HepG2 (cell line): ENCODE measurements at regions of chr9 and their contacts with region 1.

Region 1: GRCh38 chr9:128034821-128035764 is 32.0 kb downstream of the NAIF1 start:
- DNase-seq: peak; percentile 81
- ATAC-seq: peak; percentile 97
- H3K4me3 ChIP-seq: no peak overlapping the region; a peak in 1 of 6 replicates
- H3K27ac ChIP-seq: no peak overlapping the region
- H3K4me1 ChIP-seq: peaks cover 16% of the 10 kb centered on the region
- H3K27me3 ChIP-seq: no peaks in the 10 kb centered on the region; a peak in 1 of 5 replicates
- CTCF ChIP-seq: peak; percentile 98
- EP300 ChIP-seq: no peak
- POLR2A ChIP-seq: no peak
- RAD21 ChIP-seq: peak; percentile 93

Region 2: GRCh38 chr9:127644943-127645342 is 390.1 kb before region 1 on chr9:
- CTCF ChIA-PET with region 1: no interaction called
- POLR2A ChIA-PET with region 1: no interaction called
- in situ Hi-C with region 1: no loop called
- intact Hi-C with region 1: no loop called
- DNase-seq: no peak
- ATAC-seq: no peak
- H3K4me3 ChIP-seq: no peak overlapping the region
- H3K27ac ChIP-seq: no peak overlapping the region
- H3K4me1 ChIP-seq: peaks cover 18% of the 10 kb centered on the region
- H3K27me3 ChIP-seq: no peaks in the 10 kb centered on the region
- CTCF ChIP-seq: no peak
- EP300 ChIP-seq: no peak
- POLR2A ChIP-seq: no peak
- RAD21 ChIP-seq: no peak

Region 3: GRCh38 chr9:127817881-127818434 is 217.1 kb before region 1 on chr9:
- CTCF ChIA-PET with region 1: no interaction called
- POLR2A ChIA-PET with region 1: no interaction called
- in situ Hi-C with region 1: no loop called
- intact Hi-C with region 1: no loop called
- DNase-seq: no peak
- ATAC-seq: no peak; the same call in 2 of the 3 replicates
- H3K4me3 ChIP-seq: no peak overlapping the region
- H3K27ac ChIP-seq: no peak overlapping the region
- H3K4me1 ChIP-seq: peaks cover 14% of the 10 kb centered on the region
- H3K27me3 ChIP-seq: no peaks in the 10 kb centered on the region
- CTCF ChIP-seq: no peak
- EP300 ChIP-seq: no peak
- POLR2A ChIP-seq: no peak
- RAD21 ChIP-seq: no peak

Region 4: GRCh38 chr9:127937388-127938280 is 97.5 kb before region 1 on chr9 and contains the start of gene DPM2:
- CTCF ChIA-PET with region 1: interaction called, 28 read pairs
- POLR2A ChIA-PET with region 1: interaction called, 4 read pairs
- in situ Hi-C with region 1: loop called (anchors 5 kb)
- intact Hi-C with region 1: loop called (anchors 2 kb)
- DNase-seq: peak; percentile 73
- ATAC-seq: peak; percentile 89
- H3K4me3 ChIP-seq: peak within 1 kb of the TSS; percentile 86 to 96 (median 89)
- H3K27ac ChIP-seq: peak within 1 kb of the TSS; percentile 50
- H3K4me1 ChIP-seq: peaks cover 36% of the 10 kb centered on the region
- H3K27me3 ChIP-seq: no peaks in the 10 kb centered on the region; a peak in 1 of 5 replicates
- CTCF ChIP-seq: no peak
- EP300 ChIP-seq: no peak
- POLR2A ChIP-seq: peak; percentile 50 to 71
- RAD21 ChIP-seq: 0 out of 2 replicates have a peak, but pooled peaks have one; percentile 13
- total RNA-seq, gene DPM2: 17.5 and 24.8 TPM in 2 replicates

Region 5: DNA sequence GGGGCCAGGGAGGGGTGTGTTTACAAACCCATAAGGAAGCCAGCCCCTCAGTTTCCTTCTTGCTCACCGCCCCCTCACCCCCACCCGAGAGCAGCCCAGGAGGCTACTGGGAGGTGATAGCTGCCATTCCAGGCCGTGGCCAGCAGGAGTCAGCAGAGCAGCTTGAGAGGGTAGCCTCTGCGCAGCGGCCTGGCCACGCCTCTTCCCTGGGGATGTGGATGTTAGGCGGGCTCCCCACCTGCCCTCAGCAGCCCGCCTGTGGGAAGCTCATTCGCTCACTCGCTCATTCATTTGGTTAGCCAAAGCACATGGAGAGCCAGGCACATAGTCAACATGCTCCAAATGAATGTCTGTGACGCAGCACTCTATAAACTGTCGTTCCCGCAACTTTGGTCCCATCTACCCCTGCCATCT is 91.4 kb before region 1 on chr9:
- CTCF ChIA-PET with region 1: interaction called, 28 read pairs
- POLR2A ChIA-PET with region 1: interaction called, 3 read pairs
- in situ Hi-C with region 1: loop called (anchors 5 kb)
- intact Hi-C with region 1: loop called (anchors 2 kb)
- DNase-seq: peak; percentile 61
- ATAC-seq: peak; percentile 78
- H3K4me3 ChIP-seq: no peak overlapping the region
- H3K27ac ChIP-seq: no peak overlapping the region
- H3K4me1 ChIP-seq: peaks cover 49% of the 10 kb centered on the region
- H3K27me3 ChIP-seq: no peaks in the 10 kb centered on the region
- CTCF ChIP-seq: peak; percentile 92
- EP300 ChIP-seq: no peak
- POLR2A ChIP-seq: no peak
- RAD21 ChIP-seq: peak; percentile 91

Region 6: DNA sequence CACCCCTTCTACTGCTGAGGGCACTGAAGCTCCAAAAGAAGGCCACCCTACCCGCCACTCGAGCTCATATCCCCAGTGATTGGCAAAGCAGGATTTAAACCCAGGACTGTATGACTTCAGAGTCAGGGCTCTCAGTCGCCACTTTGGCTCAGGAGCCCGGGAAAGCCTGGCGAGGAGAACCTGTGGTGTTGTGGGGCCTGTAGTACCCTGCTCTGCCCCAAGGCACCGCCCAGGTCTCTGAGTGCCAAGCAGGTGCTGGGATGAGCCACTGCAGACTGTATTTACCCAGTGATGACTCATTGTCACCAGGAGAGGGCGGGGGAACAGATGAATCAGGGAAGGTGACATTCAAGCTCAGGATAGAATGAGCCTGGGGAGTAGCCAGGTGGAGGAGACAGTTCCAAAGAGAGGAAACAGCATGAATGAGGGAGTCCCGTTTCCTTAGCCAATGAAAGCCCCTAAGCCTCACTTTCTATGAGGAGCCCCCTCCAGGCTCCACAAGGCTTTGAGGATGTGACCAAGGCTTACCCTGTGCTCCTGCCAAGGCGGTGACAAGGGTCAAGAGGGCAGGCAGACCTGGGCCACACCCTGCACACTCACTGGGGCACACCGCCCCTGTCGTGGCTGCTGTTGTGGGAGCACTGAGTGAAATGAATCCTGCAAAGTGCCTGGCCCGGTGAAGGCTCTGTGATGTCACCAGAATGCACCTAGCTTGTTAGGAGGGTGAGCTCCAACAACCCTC is 79.6 kb before region 1 on chr9:
- CTCF ChIA-PET with region 1: interaction called, 12 read pairs
- POLR2A ChIA-PET with region 1: interaction called, 5 read pairs
- in situ Hi-C with region 1: no loop called
- intact Hi-C with region 1: loop called (anchors 2 kb)
- DNase-seq: peak; percentile 93
- ATAC-seq: peak; percentile 79
- H3K4me3 ChIP-seq: 0 out of 6 replicates have a peak overlapping the region, but pooled peaks of 1 of the 3 experiments have one; percentile 8
- H3K27ac ChIP-seq: peak overlapping the region; percentile 96
- H3K4me1 ChIP-seq: peaks cover 62% of the 10 kb centered on the region
- H3K27me3 ChIP-seq: no peaks in the 10 kb centered on the region
- CTCF ChIP-seq: peak; percentile 83
- EP300 ChIP-seq: peak in 1 of 2 experiments; percentile 63; a peak in 2 of 4 replicates
- POLR2A ChIP-seq: no peak
- RAD21 ChIP-seq: peak; percentile 81

Region 7: GRCh38 chr9:128072144-128073021 is 37.3 kb after region 1 on chr9:
- CTCF ChIA-PET with region 1: no interaction called
- POLR2A ChIA-PET with region 1: no interaction called
- in situ Hi-C with region 1: no loop called
- intact Hi-C with region 1: no loop called
- DNase-seq: no peak
- ATAC-seq: no peak
- H3K4me3 ChIP-seq: peak overlapping the region in 2 of 3 experiments; percentile 6 to 9; a peak in 1 of 6 replicates
- H3K27ac ChIP-seq: peak overlapping the region; percentile 51
- H3K4me1 ChIP-seq: peaks cover 55% of the 10 kb centered on the region
- H3K27me3 ChIP-seq: no peaks in the 10 kb centered on the region; a peak in 1 of 5 replicates
- CTCF ChIP-seq: no peak
- EP300 ChIP-seq: no peak
- POLR2A ChIP-seq: no peak
- RAD21 ChIP-seq: no peak

Region 8: DNA sequence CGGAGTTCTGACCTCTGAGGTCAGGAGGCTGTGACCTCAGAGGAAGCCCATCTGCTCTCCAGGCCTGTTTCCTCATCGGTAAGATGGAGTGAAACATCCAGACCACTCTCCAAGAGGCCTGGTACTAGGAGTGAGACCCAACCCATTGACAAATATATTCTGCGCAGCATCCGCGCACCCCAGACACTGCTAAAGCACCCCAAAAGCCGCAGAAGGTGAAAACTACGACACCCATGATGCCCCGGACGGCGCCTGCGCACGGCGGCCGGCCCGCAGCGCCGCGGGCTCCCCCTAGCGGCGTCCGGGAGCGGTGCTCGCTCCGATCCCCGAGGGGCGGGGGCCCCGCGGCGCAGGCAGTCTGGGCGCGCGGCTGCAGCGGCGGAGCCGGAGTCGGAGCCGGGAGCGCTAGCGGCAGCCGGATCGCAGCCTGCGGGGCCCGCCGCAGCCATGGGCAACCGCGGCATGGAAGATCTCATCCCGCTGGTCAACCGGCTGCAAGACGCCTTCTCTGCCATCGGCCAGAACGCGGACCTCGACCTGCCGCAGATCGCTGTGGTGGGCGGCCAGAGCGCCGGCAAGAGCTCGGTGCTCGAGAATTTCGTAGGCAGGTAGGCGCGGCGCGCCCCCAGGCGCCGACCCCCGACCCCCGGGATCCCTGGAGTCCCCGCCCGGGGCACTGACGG is 168.1 kb after region 1 on chr9 and contains the start of gene DNM1:
- CTCF ChIA-PET with region 1: no interaction called
- POLR2A ChIA-PET with region 1: no interaction called
- in situ Hi-C with region 1: no loop called
- intact Hi-C with region 1: no loop called
- DNase-seq: no peak
- ATAC-seq: peak; percentile 82
- H3K4me3 ChIP-seq: peak within 1 kb of the TSS; percentile 54 to 77 (median 69); a peak in 5 of 6 replicates
- H3K27ac ChIP-seq: no peak within 1 kb of the TSS
- H3K4me1 ChIP-seq: peaks cover 51% of the 10 kb centered on the region
- H3K27me3 ChIP-seq: peaks cover 6 to 24% of the 10 kb centered on the region in 2 experiments; a peak in 4 of 5 replicates
- CTCF ChIP-seq: peak; percentile 70
- EP300 ChIP-seq: no peak
- POLR2A ChIP-seq: no peak
- RAD21 ChIP-seq: peak; percentile 40; the same call in 1 of the 2 replicates
- total RNA-seq, gene DNM1: 0.13 and 0.15 TPM in 2 replicates